ENCODE measurements at regions of chr4 and their contacts with region 1.

Region 1: GRCh38 chr4:82240410-82240809 is 133.4 kb downstream of the HNRNPD start:
- DNase-seq: no peak
- H3K4me3 ChIP-seq: no peak overlapping the region
- H3K27ac ChIP-seq: no peak overlapping the region
- H3K4me1 ChIP-seq: no peaks in the 10 kb centered on the region
- H3K27me3 ChIP-seq: no peaks in the 10 kb centered on the region
- CTCF ChIP-seq: no peak
- POLR2A ChIP-seq: no peak

Region 2: DNA sequence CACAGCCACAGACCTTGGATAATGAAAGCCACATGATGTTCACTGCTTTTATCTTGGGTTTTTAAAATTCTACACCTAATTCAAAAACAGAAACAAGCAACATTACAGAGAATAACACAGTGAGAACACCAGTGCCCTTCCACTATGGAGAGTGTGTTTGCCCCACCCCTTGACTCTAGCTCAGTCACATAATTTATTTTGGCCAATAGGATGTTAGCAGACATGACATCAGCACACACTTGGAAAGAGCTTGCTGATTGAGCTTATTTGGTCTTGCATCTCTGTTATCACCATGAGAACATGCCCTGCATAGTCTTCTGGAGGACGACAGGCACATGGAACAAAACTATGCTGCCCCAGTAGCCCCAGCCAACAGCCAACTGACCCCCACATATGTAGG is 15.2 kb after region 1 on chr4:
- intact Hi-C with region 1: loop called (anchors 1 kb)
- DNase-seq: no peak
- H3K4me3 ChIP-seq: no peak overlapping the region
- H3K27ac ChIP-seq: no peak overlapping the region
- H3K4me1 ChIP-seq: no peaks in the 10 kb centered on the region
- H3K27me3 ChIP-seq: no peaks in the 10 kb centered on the region
- CTCF ChIP-seq: no peak
- POLR2A ChIP-seq: no peak

Region 3: DNA sequence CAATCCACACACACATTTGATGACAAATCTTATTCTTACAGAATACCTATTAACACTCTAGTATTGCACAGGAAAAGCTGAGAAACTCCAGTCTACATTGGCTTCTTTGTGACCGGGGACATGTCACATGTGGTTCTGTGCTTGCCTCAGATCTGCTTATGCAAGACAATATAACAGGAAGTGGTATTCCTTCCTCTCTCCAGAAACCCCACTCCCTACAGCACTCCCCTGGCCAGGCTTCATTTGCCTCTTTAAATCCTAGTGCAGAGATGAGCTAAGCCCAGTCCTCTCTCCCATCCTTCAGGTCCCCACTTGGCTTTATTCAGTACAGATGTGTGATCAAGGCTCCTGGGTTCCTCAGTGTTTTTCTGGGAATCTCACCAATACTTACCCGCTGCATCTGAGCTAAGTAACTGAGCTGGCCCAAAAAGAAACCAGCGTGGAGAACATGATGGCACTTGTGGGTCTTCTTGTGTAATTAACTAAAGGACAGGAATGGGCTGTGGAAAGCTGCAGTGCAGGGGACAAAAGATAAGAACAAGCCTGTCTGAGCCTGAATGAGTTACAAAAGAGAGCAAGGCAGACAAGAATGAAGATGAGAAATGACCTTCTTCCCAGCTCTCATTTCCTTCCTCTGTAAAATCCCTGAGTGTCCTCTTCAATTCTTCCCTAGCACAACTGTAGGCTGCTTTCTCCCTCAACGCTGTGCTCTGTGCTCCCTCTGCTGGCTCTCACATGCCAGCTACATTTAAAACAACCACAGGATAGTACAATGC is 27.8 kb after region 1 on chr4:
- intact Hi-C with region 1: no loop called
- DNase-seq: peak in 1 of 2 donors; percentile 53
- H3K4me3 ChIP-seq: peak overlapping the region in 1 of 3 donors; percentile 39
- H3K27ac ChIP-seq: peak overlapping the region; percentile 3 to 37
- H3K4me1 ChIP-seq: no peaks in the 10 kb centered on the region
- H3K27me3 ChIP-seq: no peaks in the 10 kb centered on the region
- CTCF ChIP-seq: peak; percentile 6 to 73 (median 63)
- POLR2A ChIP-seq: no peak

Region 4: DNA sequence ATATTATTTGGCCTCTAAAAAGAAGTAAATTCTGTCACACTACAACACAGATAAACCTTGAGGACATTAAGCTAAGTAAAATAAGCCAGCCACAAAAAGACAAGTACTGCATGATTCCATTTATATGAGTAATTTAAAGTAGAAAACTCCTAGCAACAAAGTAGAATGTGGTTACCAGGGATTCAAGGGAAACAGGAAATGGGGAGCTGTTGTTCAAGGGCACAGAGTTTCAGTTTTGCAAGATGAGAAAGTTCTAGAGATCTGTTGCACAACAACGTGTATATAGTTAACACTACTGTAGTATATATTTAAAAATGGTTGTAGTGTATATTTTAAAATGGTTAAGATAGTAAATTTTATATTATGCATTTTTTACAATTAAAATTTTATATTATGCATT is 625.2 kb after region 1 on chr4:
- intact Hi-C with region 1: no loop called
- DNase-seq: no peak
- H3K4me3 ChIP-seq: no peak overlapping the region
- H3K27ac ChIP-seq: peak overlapping the region in 1 of 2 donors; percentile 50
- H3K4me1 ChIP-seq: no peaks in the 10 kb centered on the region
- H3K27me3 ChIP-seq: no peaks in the 10 kb centered on the region
- CTCF ChIP-seq: no peak
- POLR2A ChIP-seq: no peak